ENCODE measurements at regions of chr1 and their contacts with region 1.

Region 1: DNA sequence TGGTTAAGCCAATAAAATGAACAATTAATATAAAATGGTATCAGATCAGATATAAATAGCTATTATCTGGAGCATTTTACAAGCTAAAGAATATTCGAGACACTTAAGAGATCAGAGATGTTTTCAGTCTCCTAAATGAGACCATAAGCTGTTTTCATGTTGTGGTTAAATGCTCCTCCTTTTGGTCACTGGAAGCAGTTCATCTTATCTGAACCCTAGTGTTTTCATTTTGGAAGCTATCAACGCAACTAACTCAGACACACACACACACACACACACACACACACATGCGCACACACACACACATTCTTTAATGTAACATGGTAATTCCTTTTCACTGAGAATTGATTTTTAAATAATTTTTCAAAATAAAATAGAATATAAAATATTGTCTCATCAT is 10.0 kb upstream of the LRRC8C start:
- DNase-seq: peak in 4 of 14 experiments; percentile 25 to 78 (median 69)
- ATAC-seq: peak; percentile 65
- H3K4me3 ChIP-seq: no peak overlapping the region
- H3K4me3 Mint-ChIP-seq: peak overlapping the region; percentile 63
- H3K27ac ChIP-seq: no peak overlapping the region
- H3K27ac Mint-ChIP-seq: peak overlapping the region; percentile 72
- H3K4me1 ChIP-seq: peaks cover 12% of the 10 kb centered on the region
- H3K4me1 Mint-ChIP-seq: peaks cover 62% of the 10 kb centered on the region
- H3K27me3 ChIP-seq: no peaks in the 10 kb centered on the region
- H3K27me3 Mint-ChIP-seq: no peaks in the 10 kb centered on the region
- CTCF ChIP-seq: no peak

Region 2: DNA sequence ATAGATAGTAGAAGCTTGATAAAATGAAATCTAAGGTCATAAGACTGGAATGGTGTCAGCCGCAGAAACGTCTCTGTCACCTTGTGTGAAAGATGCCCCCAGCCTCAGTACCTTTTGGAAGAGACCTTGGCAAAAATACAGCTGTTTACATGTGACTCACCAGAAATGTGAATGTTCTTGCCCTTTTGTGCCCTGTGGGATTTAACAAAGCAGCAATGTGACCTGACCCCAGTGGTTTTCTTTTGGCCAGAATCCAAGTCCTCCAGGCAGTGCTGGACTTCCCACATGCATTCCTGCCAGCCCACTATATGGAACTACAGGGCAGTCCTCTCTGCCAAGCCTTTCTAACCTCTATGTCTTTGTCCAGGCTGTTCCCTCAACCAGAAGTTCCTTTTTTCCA is 17.2 kb before region 1 on chr1:
- CTCF ChIA-PET with region 1: interaction called, 84 read pairs
- POLR2A ChIA-PET with region 1: interaction called, 683 read pairs
- intact Hi-C with region 1: no loop called
- DNase-seq: no peak
- ATAC-seq: no peak
- H3K4me3 ChIP-seq: no peak overlapping the region
- H3K4me3 Mint-ChIP-seq: peak overlapping the region; percentile 56
- H3K27ac ChIP-seq: peak overlapping the region; percentile 80 to 91
- H3K27ac Mint-ChIP-seq: peak overlapping the region; percentile 99
- H3K4me1 ChIP-seq: peaks cover 81% of the 10 kb centered on the region
- H3K4me1 Mint-ChIP-seq: peaks cover 94% of the 10 kb centered on the region
- H3K27me3 ChIP-seq: no peaks in the 10 kb centered on the region
- H3K27me3 Mint-ChIP-seq: no peaks in the 10 kb centered on the region
- CTCF ChIP-seq: no peak